ENCODE measurements at regions of chr12 and their contacts with region 1.

Region 1: GRCh38 chr12:83318386-83319098 is 631.8 kb downstream of the TMTC2 start:
- DNase-seq: no peak
- H3K4me3 ChIP-seq: no peak overlapping the region
- H3K27ac ChIP-seq: peak overlapping the region in 3 of 4 donors; percentile 65 to 79 (median 78)
- H3K4me1 ChIP-seq: peaks cover 0 to 29% (median 26%) of the 10 kb centered on the region in 4 donors
- H3K27me3 ChIP-seq: no peaks in the 10 kb centered on the region
- CTCF ChIP-seq: no peak
- EP300 ChIP-seq: peak; percentile 36 to 86 (median 62)
- POLR2A ChIP-seq: no peak

Region 2: DNA sequence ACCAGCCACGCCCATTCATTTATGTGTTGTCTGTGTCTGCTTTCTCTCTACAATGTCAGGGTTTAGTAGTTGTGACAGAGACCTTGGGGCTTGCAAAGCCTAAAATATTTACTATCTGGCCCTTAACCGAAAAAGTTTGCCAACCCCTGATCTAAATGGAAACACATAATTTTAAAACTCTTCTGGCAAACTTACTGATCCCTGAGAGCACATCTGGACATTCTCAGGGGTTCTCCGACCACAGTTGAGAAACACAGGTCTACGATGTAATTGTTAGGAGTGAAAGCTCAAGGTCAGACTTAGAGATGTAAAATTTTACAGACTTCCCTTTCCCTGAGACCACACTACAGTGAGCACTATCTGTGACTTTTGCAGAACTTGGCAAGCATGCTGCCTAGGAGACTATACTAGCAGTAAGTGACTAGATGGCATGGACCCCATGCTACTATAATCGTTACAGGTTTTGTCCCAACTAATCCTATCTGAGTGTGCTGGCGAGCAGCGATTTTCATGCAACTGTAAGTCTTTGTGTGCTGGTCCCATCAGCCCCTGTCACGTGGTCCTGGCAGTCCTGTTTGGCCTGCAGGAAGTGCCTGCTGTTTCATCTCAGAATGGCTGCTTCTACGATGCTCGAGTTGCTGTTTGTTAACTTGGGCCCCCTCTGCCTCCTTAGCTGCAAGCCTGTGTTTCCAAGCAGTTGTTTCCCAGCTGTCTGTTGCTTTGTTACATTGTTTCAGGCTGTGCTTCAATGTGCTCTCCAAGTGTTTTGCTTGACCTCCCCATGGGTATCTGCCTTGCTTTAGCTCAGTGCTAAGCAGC is 610.3 kb before region 1 on chr12:
- intact Hi-C with region 1: loop called (anchors 1 kb)
- DNase-seq: peak; percentile 93
- H3K4me3 ChIP-seq: peak overlapping the region in 3 of 4 donors; percentile 7 to 17 (median 13)
- H3K27ac ChIP-seq: peak overlapping the region in 3 of 4 donors; percentile 72 to 82 (median 81)
- H3K4me1 ChIP-seq: peaks cover 0 to 63% (median 49%) of the 10 kb centered on the region in 4 donors
- H3K27me3 ChIP-seq: no peaks in the 10 kb centered on the region
- CTCF ChIP-seq: no peak
- EP300 ChIP-seq: peak; percentile 6 to 83 (median 62)
- POLR2A ChIP-seq: no peak

Region 3: GRCh38 chr12:83016218-83016835 is 302.2 kb before region 1 on chr12:
- intact Hi-C with region 1: loop called (anchors 10 kb)
- DNase-seq: peak; percentile 84
- H3K4me3 ChIP-seq: peak overlapping the region; percentile 22 to 46 (median 40)
- H3K27ac ChIP-seq: peak overlapping the region; percentile 30 to 88 (median 83)
- H3K4me1 ChIP-seq: peaks cover 0 to 53% (median 23%) of the 10 kb centered on the region in 4 donors
- H3K27me3 ChIP-seq: no peaks in the 10 kb centered on the region
- CTCF ChIP-seq: no peak
- EP300 ChIP-seq: no peak
- POLR2A ChIP-seq: no peak

Region 4: DNA sequence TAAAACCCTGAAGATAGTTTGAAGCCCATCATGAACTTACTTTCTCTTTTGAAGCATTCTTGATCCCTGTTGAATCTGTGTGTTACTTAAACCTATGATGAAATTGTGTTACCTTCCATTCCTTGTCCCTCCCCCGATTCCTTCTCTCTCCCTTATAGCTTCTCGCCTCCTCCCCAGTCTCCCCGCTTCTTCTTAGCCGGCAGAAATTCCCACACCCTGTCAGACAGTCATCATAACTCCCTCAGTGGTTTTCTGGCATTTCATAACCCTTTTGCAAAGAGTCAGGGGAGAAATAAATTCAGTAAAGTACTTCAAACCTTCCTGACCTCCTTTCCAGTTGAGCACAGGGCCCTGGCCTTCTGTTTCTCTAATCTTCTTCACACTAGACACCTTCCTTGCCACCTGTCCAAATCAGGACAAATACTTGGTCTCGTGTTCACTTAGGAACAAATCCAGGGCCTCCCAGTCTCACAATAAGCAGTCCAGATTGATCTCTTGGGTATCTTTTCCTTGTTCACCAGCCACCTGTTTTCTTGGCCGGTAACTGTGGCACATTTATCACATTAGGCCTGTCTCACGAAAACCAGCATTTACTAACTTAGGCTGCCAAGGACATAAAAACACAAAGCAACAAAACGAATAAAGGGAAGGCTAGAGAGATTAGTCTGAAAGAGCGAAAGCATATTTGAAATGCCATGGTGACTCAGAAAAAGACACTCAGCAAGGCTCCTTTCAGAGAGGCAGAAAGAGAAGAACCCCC is 275.9 kb before region 1 on chr12:
- intact Hi-C with region 1: loop called (anchors 10 kb)
- DNase-seq: peak; percentile 59
- H3K4me3 ChIP-seq: no peak overlapping the region
- H3K27ac ChIP-seq: peak overlapping the region; percentile 17 to 80 (median 72)
- H3K4me1 ChIP-seq: peaks cover 0 to 49% (median 36%) of the 10 kb centered on the region in 4 donors
- H3K27me3 ChIP-seq: no peaks in the 10 kb centered on the region
- CTCF ChIP-seq: no peak
- EP300 ChIP-seq: no peak
- POLR2A ChIP-seq: no peak

Region 5: GRCh38 chr12:83527810-83528209 is 209.3 kb after region 1 on chr12:
- intact Hi-C with region 1: loop called (anchors 5 kb)
- DNase-seq: no peak
- H3K4me3 ChIP-seq: no peak overlapping the region
- H3K27ac ChIP-seq: peak overlapping the region in 1 of 4 donors; percentile 45
- H3K4me1 ChIP-seq: peaks cover 0 to 21% (median 10%) of the 10 kb centered on the region in 4 donors
- H3K27me3 ChIP-seq: no peaks in the 10 kb centered on the region
- CTCF ChIP-seq: no peak
- EP300 ChIP-seq: peak in 2 of 4 donors; percentile 14 to 50
- POLR2A ChIP-seq: no peak

Region 6: GRCh38 chr12:83823431-83823963 is 505.0 kb after region 1 on chr12:
- intact Hi-C with region 1: loop called (anchors 10 kb)
- DNase-seq: no peak
- H3K4me3 ChIP-seq: no peak overlapping the region
- H3K27ac ChIP-seq: no peak overlapping the region
- H3K4me1 ChIP-seq: peaks cover 0 to 20% (median 14%) of the 10 kb centered on the region in 4 donors
- H3K27me3 ChIP-seq: no peaks in the 10 kb centered on the region
- CTCF ChIP-seq: peak in 2 of 4 experiments; percentile 10 to 29
- EP300 ChIP-seq: no peak
- POLR2A ChIP-seq: no peak

Region 7: DNA sequence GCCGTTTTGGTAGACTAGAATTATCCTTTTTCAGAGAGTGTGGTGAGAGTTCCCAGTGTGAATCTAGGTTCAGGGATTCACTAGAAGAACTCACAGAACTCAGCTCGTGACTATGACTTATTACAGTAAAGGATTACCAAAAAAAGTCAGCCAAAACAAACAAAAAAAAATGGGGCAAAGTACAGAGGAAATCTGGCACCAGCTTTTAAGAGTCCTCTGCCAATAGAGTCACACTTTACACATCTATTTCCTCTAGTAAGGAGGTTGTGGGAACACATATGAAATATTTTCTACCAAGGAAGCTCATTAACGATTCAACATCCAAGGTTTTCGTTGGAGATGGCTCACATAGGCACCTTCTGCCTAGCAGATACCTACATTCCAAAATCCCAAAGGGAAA is 1689.3 kb after region 1 on chr12:
- intact Hi-C with region 1: no loop called
- DNase-seq: no peak
- H3K4me3 ChIP-seq: no peak overlapping the region
- H3K27ac ChIP-seq: no peak overlapping the region
- H3K4me1 ChIP-seq: no peaks in the 10 kb centered on the region
- H3K27me3 ChIP-seq: no peaks in the 10 kb centered on the region
- CTCF ChIP-seq: no peak
- EP300 ChIP-seq: no peak
- POLR2A ChIP-seq: no peak